AG04450 (cell line): ENCODE measurements at regions of chr10 and their contacts with region 1.

Region 1: GRCh38 chr10:109883859-109884771 is 39.2 kb downstream of the XPNPEP1 start:
- DNase-seq: peak; percentile 77
- H3K4me3 ChIP-seq: no peak overlapping the region
- H3K27ac ChIP-seq: peak overlapping the region; percentile 63
- H3K27me3 ChIP-seq: no peaks in the 10 kb centered on the region
- CTCF ChIP-seq: peak; percentile 97

Region 2: GRCh38 chr10:109894516-109894915 is 10.4 kb after region 1 on chr10:
- CTCF ChIA-PET with region 1: interaction called, 43 read pairs
- POLR2A ChIA-PET with region 1: interaction called, 3 read pairs
- DNase-seq: peak; percentile 67
- H3K4me3 ChIP-seq: no peak overlapping the region
- H3K27ac ChIP-seq: peak overlapping the region; percentile 23
- H3K27me3 ChIP-seq: no peaks in the 10 kb centered on the region
- CTCF ChIP-seq: no peak

Region 3: DNA sequence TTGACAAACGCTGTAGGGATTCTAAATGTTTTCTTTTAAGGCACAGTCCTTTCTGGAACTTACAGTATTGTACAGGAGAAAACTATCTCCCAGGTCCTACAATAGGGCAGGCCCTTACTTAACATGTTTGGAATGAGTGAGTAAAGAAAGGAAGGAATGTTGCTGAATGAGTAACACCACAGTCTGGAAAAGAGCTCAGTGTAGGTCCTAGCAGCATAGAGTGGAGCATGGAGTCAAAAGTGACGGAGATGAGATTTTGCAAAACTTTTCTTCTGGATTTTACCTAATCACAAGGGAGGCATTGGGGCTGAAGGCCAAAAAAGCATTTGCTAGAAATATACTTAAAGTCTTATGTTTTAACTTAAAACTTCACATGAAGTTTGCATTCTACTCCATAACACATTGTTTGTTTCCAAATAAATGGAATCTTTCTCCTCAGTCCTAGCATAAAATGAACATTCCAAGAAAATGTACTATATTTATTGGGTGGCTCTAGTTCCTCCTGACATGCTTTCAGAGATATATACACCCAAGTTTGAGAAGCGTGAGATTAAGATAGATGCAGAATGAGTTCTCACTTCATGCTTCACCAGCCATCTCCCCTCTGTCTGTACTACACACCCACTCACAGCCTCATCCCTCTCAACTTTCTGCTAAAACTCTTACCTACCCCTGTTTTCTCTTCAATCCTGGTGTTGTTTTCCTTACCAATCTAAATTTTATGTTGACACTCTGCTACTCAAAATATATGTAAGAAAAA is 103.5 kb after region 1 on chr10:
- CTCF ChIA-PET with region 1: interaction called, 10 read pairs
- POLR2A ChIA-PET with region 1: no interaction called
- DNase-seq: no peak
- H3K4me3 ChIP-seq: no peak overlapping the region
- H3K27ac ChIP-seq: no peak overlapping the region
- H3K27me3 ChIP-seq: no peaks in the 10 kb centered on the region
- CTCF ChIP-seq: no peak

Region 4: GRCh38 chr10:110036640-110037039 is 152.5 kb after region 1 on chr10:
- CTCF ChIA-PET with region 1: interaction called, 11 read pairs
- POLR2A ChIA-PET with region 1: no interaction called
- DNase-seq: no peak
- H3K4me3 ChIP-seq: no peak overlapping the region
- H3K27ac ChIP-seq: no peak overlapping the region
- H3K27me3 ChIP-seq: no peaks in the 10 kb centered on the region
- CTCF ChIP-seq: no peak

Region 5: GRCh38 chr10:110067960-110068770 is 184.1 kb after region 1 on chr10:
- CTCF ChIA-PET with region 1: interaction called, 18 read pairs
- POLR2A ChIA-PET with region 1: no interaction called
- DNase-seq: no peak
- H3K4me3 ChIP-seq: no peak overlapping the region
- H3K27ac ChIP-seq: no peak overlapping the region
- H3K27me3 ChIP-seq: no peaks in the 10 kb centered on the region
- CTCF ChIP-seq: no peak

Region 6: DNA sequence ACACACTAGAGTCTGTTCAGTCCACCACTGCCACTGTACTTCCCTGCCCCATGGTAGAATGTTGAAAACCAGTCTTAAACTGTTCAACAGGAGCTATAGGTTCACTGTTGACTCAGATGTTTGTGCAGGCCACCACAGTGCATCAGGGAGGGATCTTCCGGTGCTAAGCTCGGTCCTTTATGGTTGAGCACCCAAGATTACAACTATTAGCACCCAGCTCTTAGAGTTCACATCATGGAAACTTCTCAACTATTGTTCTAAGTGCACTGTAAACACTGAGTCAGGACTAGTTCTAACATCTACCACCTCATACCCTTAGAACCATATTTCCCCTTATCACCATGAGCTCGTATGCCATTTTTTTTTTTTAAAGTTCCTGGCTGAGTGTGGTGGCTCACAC is 226.2 kb after region 1 on chr10:
- CTCF ChIA-PET with region 1: interaction called, 42 read pairs
- POLR2A ChIA-PET with region 1: no interaction called
- DNase-seq: no peak
- H3K4me3 ChIP-seq: no peak overlapping the region
- H3K27ac ChIP-seq: no peak overlapping the region
- H3K27me3 ChIP-seq: no peaks in the 10 kb centered on the region
- CTCF ChIP-seq: no peak

Region 7: GRCh38 chr10:110279407-110279986 is 395.4 kb after region 1 on chr10:
- CTCF ChIA-PET with region 1: interaction called, 38 read pairs
- POLR2A ChIA-PET with region 1: no interaction called
- DNase-seq: peak; percentile 43
- H3K4me3 ChIP-seq: no peak overlapping the region
- H3K27ac ChIP-seq: no peak overlapping the region
- H3K27me3 ChIP-seq: no peaks in the 10 kb centered on the region
- CTCF ChIP-seq: peak; percentile 80

Region 8: DNA sequence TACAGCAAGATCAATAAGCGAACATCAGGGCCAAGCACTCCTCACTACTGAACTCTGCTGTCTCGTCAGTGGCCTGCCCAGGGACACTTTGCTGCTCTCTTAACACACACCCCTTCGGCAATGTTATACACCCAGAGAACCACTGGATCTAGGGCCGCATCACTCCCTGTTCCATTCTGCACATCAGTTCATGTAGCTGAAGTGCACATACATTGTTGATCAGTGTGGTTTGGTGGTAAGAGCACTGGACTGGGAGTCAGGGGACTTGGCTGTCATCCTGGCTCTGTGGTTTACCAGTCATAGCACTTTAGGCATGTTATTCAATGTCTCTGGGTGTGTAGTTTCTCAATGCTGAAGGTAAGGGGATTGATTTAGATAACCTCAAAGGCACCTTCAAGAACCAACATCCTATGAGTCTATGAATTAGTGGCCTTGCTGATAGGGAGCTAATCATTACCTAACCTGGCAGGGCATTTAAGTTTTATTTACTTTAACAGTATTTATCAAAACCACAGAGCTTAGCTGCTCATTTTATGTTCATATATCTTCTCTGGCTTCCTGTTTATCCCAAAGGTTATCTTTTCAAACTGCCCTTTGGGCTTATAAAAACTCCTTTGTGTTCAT is 638.4 kb after region 1 on chr10:
- CTCF ChIA-PET with region 1: no interaction called
- POLR2A ChIA-PET with region 1: no interaction called
- DNase-seq: no peak
- H3K4me3 ChIP-seq: no peak overlapping the region
- H3K27ac ChIP-seq: no peak overlapping the region
- H3K27me3 ChIP-seq: no peaks in the 10 kb centered on the region
- CTCF ChIP-seq: no peak